Right ventricle myocardium inferior (tissue), 1 donor: ENCODE measurements at regions of chr13 and their contacts with region 1.

Region 1: DNA sequence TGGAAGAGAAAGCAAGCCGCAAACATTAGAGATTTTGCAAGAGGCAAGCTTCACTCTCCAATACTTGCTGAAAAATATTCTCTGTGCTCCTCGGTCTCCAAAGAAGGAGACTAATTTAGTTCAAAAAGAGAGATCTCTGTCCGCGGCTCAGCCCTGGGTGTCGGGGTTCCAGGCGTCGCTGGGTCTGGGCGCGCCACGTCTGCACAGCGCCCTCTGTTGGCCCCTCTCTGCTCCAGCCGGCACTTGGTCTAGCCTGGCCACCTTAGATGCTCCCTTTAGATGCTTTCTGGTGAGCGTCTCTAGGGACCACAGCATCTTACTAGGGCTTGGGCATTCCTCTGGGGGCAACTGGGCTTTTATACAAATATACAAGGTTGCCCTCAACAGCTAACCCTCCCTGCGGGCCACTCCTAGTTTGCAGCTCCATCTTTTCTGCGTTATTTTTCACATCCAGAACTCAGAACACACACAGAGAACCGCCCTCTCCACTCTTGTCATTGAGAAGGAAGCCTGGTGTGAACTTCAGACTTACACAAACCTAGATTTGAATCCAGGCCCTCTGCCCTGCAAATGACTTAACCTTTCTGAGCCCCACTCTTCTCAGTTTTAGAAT is 78.3 kb downstream of the CYSLTR2 start:
- DNase-seq: peak; percentile 80
- ATAC-seq: peak; percentile 44

Region 2: GRCh38 chr13:48660361-48661076 is 71.5 kb before region 1 on chr13:
- intact Hi-C with region 1: loop called (anchors 5 kb)
- DNase-seq: peak; percentile 23
- ATAC-seq: peak; percentile 96